ENCODE measurements at regions of chr5 and their contacts with region 1.

Region 1: DNA sequence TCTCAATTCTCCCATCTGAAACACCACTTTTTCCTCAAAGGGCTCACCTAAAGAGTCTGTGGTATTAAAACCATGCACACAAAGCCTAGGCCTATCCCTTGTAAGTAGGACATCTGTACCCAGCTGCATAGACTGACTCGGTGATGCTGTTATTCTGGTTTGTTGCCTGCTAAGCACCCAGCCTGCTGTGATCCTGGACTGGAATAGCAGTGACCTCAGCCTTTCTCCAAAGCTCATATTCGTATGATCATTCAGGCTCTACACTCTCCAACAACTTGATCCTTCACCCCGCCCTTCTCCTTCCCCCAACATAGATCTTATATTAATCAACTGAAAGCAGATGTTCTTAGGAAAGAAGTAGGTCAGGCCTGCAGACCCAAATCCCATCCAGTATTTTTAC is 81.4 kb upstream of the WWC1 start:
- DNase-seq: no peak

Region 2: DNA sequence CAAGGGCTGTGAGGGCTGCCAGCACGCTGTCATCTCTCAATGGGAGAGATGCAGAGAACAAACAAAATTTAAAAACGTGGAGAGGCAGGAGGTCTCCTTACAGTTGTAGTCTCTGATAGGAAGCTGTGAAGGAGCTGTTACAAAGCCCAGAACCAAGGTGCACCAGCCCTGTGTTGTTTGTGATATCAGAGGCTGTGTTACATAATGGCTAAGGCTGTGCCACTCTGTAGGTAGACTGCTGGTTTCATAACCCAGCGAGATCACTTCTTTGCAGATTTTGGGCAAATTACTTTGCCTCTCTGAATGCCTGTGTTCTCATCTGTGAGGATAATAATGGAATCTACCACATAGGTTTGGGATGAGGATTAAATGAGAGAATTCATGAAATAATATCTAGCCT is 1399.3 kb before region 1 on chr5:
- intact Hi-C with region 1: loop called in 1 of 2 experiments (anchors 5 kb)
- DNase-seq: no peak